ENCODE measurements at regions of chr19 and their contacts with region 1.

Region 1: DNA sequence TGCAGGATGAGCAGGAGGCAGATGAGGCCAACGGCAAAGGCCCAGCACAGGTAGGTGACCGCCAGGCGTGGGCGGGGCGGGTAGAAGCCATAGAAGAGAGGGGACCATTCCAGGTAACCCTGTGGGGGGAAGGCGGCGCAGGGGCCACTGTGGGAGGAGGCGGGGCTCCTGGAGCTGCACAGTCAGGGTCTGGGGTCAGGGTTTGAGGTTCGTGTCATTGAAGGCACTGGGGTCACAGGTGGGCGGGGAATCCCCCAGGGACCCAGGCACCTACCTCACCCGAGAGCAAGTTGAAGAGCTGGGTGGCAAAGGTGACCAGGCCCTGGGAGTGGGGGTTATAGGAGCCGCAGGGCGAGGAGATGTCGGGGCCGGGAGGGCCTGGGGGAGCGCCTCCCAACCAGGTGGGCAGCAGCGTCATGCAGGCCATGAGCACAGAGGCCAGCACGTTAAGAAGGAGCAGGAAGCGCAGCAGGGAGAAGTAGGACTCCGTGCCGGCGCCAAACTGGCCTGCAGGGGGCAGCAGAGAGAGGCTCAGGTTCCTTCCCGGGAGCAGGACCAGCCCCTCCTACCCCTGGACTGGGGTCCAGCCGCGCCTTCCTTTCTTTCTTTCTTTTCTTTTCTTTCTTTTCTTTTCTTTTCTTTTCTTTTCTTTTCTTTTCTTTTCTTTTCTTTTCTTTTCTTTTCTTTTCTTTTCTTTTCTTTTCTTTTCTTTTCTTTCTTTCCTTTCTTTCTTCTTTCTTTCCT is 4.6 kb downstream of the TMC4 start:
- DNase-seq: peak; percentile 89
- H3K4me3 Mint-ChIP-seq: no peak overlapping the region
- H3K27ac Mint-ChIP-seq: no peak overlapping the region
- H3K4me1 Mint-ChIP-seq: peaks cover 23% of the 10 kb centered on the region
- H3K27me3 Mint-ChIP-seq: no peaks in the 10 kb centered on the region

Region 2: DNA sequence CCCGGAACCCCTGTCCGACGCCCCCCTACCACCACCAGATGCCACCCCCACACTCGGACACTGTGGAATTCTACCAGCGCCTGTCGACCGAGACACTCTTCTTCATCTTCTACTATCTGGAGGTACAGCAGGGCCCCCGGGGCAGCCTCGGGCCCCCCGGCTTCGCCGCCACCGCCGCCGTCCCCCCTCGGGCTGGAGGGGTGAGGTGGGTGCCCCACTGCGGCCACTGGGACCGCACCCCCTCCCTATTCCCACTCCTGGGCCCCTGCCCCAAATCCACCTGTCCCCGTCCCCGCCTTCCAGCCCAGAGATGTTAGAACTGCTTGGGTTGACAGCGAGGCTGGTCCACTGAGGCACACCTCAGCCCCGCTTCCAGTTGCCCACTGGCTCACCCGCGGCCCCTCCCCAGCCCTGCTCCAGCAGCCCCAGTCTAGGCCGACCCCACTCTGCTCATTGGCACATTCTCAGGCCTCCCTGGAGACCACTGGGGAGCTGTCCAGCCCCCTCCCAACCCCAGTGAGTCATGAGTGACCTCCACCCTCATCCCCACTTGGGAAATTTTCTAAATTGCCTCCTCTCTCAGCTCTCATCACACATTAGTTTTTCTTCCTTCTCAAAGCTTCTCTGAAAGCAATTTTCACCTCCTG is 15.3 kb before region 1 on chr19:
- CTCF ChIA-PET with region 1: no interaction called
- POLR2A ChIA-PET with region 1: no interaction called
- DNase-seq: no peak
- H3K4me3 Mint-ChIP-seq: no peak overlapping the region
- H3K27ac Mint-ChIP-seq: peak overlapping the region; percentile 14
- H3K4me1 Mint-ChIP-seq: peaks cover 27% of the 10 kb centered on the region
- H3K27me3 Mint-ChIP-seq: no peaks in the 10 kb centered on the region

Region 3: GRCh38 chr19:54189735-54190502 is 21.6 kb after region 1 on chr19:
- CTCF ChIA-PET with region 1: interaction called, 27 read pairs
- POLR2A ChIA-PET with region 1: no interaction called
- DNase-seq: peak; percentile 100
- H3K4me3 Mint-ChIP-seq: peak overlapping the region; percentile 94
- H3K27ac Mint-ChIP-seq: peak overlapping the region; percentile 97
- H3K4me1 Mint-ChIP-seq: peaks cover 40% of the 10 kb centered on the region
- H3K27me3 Mint-ChIP-seq: no peaks in the 10 kb centered on the region